Right ventricle myocardium inferior (tissue), 1 donor: ENCODE measurements at regions of chr13 and their contacts with region 1.

Region 1: GRCh38 chr13:40292108-40292507 is 374.3 kb downstream of the FOXO1 start:
- DNase-seq: peak; percentile 68
- ATAC-seq: peak; percentile 78

Region 2: GRCh38 chr13:40336228-40337221 is 44.4 kb after region 1 on chr13:
- intact Hi-C with region 1: loop called (anchors 5 kb)
- DNase-seq: no peak
- ATAC-seq: no peak

Region 3: DNA sequence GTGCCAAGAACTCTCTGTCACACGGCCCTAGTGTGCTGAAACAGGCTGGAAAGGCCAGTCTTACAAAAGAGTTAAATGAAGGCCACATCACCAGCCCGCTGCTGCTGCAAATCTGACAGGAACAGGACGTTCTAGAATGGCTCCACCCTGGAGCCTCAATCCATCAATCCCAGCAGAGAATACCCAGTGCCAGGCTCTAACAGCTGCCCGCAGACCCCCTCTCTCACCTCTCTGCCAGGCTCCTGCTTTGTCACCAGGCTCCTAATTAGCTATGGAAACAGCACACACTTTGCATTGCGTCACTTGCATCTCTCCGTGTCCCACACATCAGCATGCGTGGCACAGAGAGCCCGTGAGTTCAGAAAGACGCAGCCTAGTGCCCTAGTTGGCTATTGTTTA is 60.3 kb after region 1 on chr13:
- intact Hi-C with region 1: loop called (anchors 5 kb)
- DNase-seq: peak; percentile 69
- ATAC-seq: peak; percentile 91